ENCODE measurements at regions of chr18 and their contacts with region 1.

Region 1: DNA sequence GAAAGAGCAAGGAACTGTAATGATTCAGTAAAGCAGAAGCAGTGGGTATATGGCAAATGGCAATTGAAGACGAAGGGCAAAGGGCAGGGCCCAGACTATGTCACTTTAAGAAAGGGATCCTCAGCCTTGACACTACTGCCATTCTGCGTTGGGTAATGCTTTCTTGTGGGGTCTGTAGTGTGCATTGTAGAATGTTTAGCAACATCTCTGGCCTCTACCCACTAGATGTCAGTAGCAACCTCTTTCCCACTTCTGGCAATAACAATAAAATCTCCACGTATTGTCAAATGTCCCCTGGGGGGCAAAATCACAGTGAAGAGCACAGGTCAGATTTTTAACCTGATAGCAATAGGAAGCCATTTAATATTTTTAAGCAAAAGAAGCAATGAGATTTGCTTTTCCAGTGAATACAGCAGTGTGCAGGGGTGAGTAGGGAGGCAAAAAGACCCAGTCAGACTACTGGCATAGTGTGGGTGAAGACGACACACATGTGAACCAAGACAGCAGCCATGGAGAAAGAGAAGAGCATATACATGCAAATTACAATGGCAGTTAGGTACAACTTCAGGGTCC is 209.5 kb downstream of the DYM start:
- DNase-seq: peak; percentile 26
- H3K4me3 ChIP-seq: no peak overlapping the region; a peak in 1 of 4 replicates
- H3K27ac ChIP-seq: no peak overlapping the region; a peak in 1 of 4 replicates
- H3K4me1 ChIP-seq: peaks cover 2 to 24% of the 10 kb centered on the region in 2 experiments
- H3K27me3 ChIP-seq: no peaks in the 10 kb centered on the region
- CTCF ChIP-seq: peak; percentile 65
- EP300 ChIP-seq: no peak
- RAD21 ChIP-seq: peak; percentile 74

Region 2: GRCh38 chr18:49368876-49369440 is 118.1 kb after region 1 on chr18:
- CTCF ChIA-PET with region 1: no interaction called
- POLR2A ChIA-PET with region 1: no interaction called
- DNase-seq: no peak
- H3K4me3 ChIP-seq: no peak overlapping the region
- H3K27ac ChIP-seq: no peak overlapping the region
- H3K4me1 ChIP-seq: no peaks in the 10 kb centered on the region
- H3K27me3 ChIP-seq: no peaks in the 10 kb centered on the region
- CTCF ChIP-seq: no peak
- EP300 ChIP-seq: no peak
- RAD21 ChIP-seq: no peak

Region 3: GRCh38 chr18:49416511-49416910 is 165.6 kb after region 1 on chr18:
- CTCF ChIA-PET with region 1: interaction called, 15 read pairs
- POLR2A ChIA-PET with region 1: no interaction called
- DNase-seq: no peak
- H3K4me3 ChIP-seq: no peak overlapping the region
- H3K27ac ChIP-seq: no peak overlapping the region
- H3K4me1 ChIP-seq: peaks cover 0 to 7% of the 10 kb centered on the region in 2 experiments; a peak in 1 of 4 replicates
- H3K27me3 ChIP-seq: no peaks in the 10 kb centered on the region
- CTCF ChIP-seq: no peak
- EP300 ChIP-seq: no peak
- RAD21 ChIP-seq: no peak

Measured in SK-N-SH (cell line).